Heart right ventricle (tissue), 16 donors: ENCODE measurements at regions of chr19 and their contacts with region 1.

Region 1: GRCh38 chr19:21141787-21142464 is at the start of gene ZNF431:
- DNase-seq: peak; percentile 89 to 95
- ATAC-seq: peak; percentile 98 to 100 (median 99)
- H3K4me3 ChIP-seq: peak within 1 kb of the TSS; percentile 43 to 87 (median 70)
- H3K27ac ChIP-seq: peak within 1 kb of the TSS in 9 of 10 donors; percentile 64 to 85 (median 80)
- H3K4me1 ChIP-seq: peaks cover 0 to 18% (median 13%) of the 10 kb centered on the region in 9 donors
- H3K27me3 ChIP-seq: no peaks in the 10 kb centered on the region
- CTCF ChIP-seq: no peak
- total RNA-seq, gene ZNF431: 10.9 to 19.6 (median 15.1) TPM

Region 2: GRCh38 chr19:21020298-21021227 is 121.4 kb before region 1 on chr19 and contains the start of gene ZNF430:
- intact Hi-C with region 1: loop called in 1 of 10 experiments (anchors 5 kb)
- DNase-seq: peak; percentile 87 to 96
- ATAC-seq: peak; percentile 100
- H3K4me3 ChIP-seq: peak within 1 kb of the TSS; percentile 77 to 99 (median 88)
- H3K27ac ChIP-seq: peak within 1 kb of the TSS; percentile 42 to 94 (median 84)
- H3K4me1 ChIP-seq: peaks cover 0 to 29% (median 11%) of the 10 kb centered on the region in 9 donors
- H3K27me3 ChIP-seq: no peaks in the 10 kb centered on the region
- CTCF ChIP-seq: no peak
- total RNA-seq, gene ZNF430: 3.1 to 5.7 (median 4.2) TPM

Region 3: DNA sequence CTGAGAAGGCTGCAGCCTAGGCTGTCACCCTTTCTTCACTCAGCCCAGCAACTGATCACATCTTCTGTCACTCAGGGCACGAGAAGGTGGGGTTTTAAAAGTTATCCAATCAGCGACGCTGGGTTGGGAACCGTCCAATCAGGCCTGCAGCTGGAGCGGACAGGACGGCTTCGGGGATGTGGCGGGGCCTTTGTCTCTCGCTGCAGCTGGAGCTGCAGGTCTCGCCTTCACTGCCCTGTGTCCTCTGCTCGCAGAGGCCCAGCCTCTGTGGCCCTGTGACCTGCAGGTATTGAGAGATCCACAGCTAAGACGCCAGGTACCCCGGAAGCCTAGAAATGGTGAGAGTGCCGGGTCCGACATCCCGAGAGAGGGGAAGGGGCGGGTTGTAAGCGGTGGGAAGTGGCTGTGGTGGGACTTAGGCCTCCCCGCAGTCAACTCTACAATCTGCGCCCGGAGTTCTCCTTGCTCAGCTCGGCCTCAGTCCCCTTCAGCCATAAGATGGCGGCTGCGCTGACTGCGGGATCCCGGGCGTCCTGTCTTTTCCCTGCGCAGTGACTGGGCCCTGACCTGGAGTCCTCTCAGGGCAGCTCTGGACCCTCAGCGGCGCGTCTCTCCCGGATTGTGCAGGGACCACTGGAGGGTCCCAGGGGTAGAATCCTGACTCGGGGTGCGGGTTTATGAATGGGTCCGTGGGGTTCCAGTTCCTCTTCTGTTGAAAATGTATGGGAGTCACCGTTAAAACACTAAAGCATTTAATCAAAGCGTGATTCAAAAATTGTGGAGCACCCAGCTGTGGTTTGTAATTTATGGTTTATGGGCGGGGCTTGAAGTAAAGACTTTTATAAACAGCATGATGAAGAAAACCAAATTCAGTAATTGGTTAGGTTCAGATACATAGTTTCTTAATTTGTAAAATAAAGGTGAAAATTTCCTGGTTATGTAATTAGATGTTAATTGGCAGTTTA is 59.6 kb before region 1 on chr19 and contains the start of gene ZNF714:
- intact Hi-C with region 1: loop called in 2 of 10 experiments (anchors 10 kb)
- DNase-seq: peak; percentile 83 to 93
- ATAC-seq: peak; percentile 100
- H3K4me3 ChIP-seq: peak within 1 kb of the TSS; percentile 33 to 85 (median 66)
- H3K27ac ChIP-seq: peak within 1 kb of the TSS in 9 of 10 donors; percentile 20 to 76 (median 59)
- H3K4me1 ChIP-seq: peaks cover 0 to 9% (median 0%) of the 10 kb centered on the region in 9 donors
- H3K27me3 ChIP-seq: no peaks in the 10 kb centered on the region
- CTCF ChIP-seq: no peak
- total RNA-seq, gene ZNF714: 2.7 to 6.1 (median 3.6) TPM